Naive thymus-derived CD4-positive, alpha-beta T cell (primary cell): ENCODE measurements at regions of chr4 and their contacts with region 1.

Region 1: DNA sequence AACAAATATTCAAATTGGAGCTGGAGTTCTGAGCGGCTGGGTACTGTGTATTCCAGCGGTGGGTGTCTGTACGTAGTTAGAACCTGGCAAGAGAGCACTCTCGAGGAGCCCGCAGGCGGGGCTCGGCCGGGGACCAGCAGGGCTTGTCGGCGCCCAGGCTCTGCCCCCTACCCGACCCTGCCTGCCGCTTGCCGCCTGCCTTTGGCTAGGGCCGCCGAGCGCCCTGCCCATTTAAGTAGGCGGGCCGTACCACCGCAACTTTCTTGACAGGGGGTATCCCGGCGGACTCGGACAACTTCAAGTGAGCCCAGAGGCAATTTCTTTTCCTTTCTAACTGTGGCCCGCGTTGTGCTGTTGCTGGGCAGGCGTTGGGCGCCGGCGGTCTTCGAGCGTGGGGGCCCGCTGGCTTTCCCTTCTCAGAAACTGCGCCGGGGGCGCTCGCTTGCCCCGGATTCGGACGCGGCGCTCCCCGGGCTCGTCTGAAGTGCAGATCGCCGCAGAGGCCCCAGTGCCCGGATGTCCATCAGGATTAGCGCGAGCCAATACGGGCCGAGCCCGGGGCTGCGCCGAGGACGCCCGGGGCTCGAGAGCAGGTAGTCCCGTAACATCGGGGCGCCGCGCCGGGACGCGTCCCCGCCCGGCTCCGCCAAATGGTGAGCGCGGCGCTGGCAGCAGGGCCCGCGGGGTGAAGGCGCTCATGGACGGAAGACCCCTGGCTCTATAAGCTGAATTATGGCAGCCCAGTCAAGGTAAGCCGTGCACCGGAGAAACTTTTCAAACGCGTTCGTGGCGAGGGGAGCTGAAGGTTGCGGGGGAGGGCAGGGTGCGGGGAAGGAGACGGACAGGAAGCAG is 72.1 kb downstream of the AFF1 start:
- DNase-seq: peak; percentile 85 to 92 (median 89)
- ATAC-seq: peak; percentile 88
- H3K4me3 ChIP-seq: peak overlapping the region; percentile 85
- H3K4me3 Mint-ChIP-seq: peak overlapping the region; percentile 87 to 100 (median 93)
- H3K27ac ChIP-seq: peak overlapping the region; percentile 91
- H3K27ac Mint-ChIP-seq: peak overlapping the region; percentile 95 to 99 (median 98)
- H3K4me1 ChIP-seq: peaks cover 25 to 28% of the 10 kb centered on the region in 2 donors
- H3K4me1 Mint-ChIP-seq: peaks cover 39 to 72% (median 59%) of the 10 kb centered on the region in 7 donors
- H3K27me3 ChIP-seq: no peaks in the 10 kb centered on the region
- H3K27me3 Mint-ChIP-seq: no peaks in the 10 kb centered on the region

Region 2: DNA sequence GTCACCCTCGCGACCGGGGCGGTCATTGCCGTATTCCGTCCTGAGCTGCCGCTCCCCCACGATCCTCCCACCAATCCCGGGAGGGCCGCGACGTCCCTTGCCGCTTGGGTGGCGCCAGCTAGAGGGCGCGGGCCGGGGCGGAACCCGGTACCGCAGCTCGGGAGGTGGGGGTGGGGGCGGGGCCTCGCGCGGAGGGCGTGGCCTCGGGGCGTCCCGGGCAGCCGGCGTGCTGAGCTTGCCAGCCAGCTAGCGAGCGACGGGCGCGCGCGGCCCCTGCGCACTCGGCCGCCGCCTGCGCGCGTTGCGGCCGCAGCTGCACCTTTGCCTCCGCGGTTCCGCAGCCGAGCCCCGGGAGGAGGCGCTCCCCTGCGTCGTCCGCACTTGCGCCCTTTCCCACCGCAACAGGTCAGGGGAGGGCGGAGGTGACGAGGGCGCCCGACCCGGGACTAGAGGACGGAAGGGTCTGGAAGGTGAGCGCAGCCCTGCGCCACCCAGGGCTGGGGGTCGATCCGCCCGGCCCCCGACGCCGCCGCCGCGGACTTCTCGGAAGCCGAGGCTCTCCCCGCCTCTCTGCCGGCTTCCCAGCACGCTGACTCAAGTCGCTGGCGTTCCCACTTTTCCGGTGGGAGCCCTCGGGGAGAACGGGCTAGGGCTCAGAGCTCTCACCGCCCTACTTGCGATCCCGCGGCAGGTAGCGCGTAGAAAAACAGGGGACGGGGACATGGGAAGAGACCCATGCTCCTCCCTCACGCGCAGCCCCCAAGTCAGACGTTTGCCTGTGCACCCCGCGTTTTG is 71.9 kb before region 1 on chr4 and contains the start of gene AFF1:
- CTCF ChIA-PET with region 1: interaction called, 17 read pairs
- POLR2A ChIA-PET with region 1: interaction called, 193 read pairs
- intact Hi-C with region 1: loop called (anchors 1 kb)
- DNase-seq: peak; percentile 74 to 91 (median 81)
- ATAC-seq: peak; percentile 90
- H3K4me3 ChIP-seq: peak within 1 kb of the TSS; percentile 91
- H3K4me3 Mint-ChIP-seq: peak within 1 kb of the TSS; percentile 92 to 97 (median 94)
- H3K27ac ChIP-seq: peak within 1 kb of the TSS; percentile 90
- H3K27ac Mint-ChIP-seq: peak within 1 kb of the TSS; percentile 91 to 97 (median 96)
- H3K4me1 ChIP-seq: peaks cover 29% of the 10 kb centered on the region in 2 donors
- H3K4me1 Mint-ChIP-seq: peaks cover 37 to 61% (median 53%) of the 10 kb centered on the region in 7 donors
- H3K27me3 ChIP-seq: no peaks in the 10 kb centered on the region
- H3K27me3 Mint-ChIP-seq: no peaks in the 10 kb centered on the region
- total RNA-seq, gene AFF1: 65.8 to 88.6 (median 78.7) TPM

Region 3: GRCh38 chr4:87044511-87045233 is 37.8 kb after region 1 on chr4:
- CTCF ChIA-PET with region 1: no interaction called
- POLR2A ChIA-PET with region 1: interaction called, 4 read pairs
- intact Hi-C with region 1: loop called in 1 of 2 experiments (anchors 2 kb)
- DNase-seq: no peak
- ATAC-seq: peak; percentile 44
- H3K4me3 ChIP-seq: no peak overlapping the region
- H3K4me3 Mint-ChIP-seq: no peak overlapping the region
- H3K27ac ChIP-seq: no peak overlapping the region
- H3K27ac Mint-ChIP-seq: no peak overlapping the region
- H3K4me1 ChIP-seq: peaks cover 0 to 8% of the 10 kb centered on the region in 2 donors
- H3K4me1 Mint-ChIP-seq: peaks cover 19 to 55% (median 29%) of the 10 kb centered on the region in 7 donors
- H3K27me3 ChIP-seq: no peaks in the 10 kb centered on the region
- H3K27me3 Mint-ChIP-seq: no peaks in the 10 kb centered on the region

Region 4: GRCh38 chr4:87103691-87104187 is 96.8 kb after region 1 on chr4:
- CTCF ChIA-PET with region 1: interaction called, 3 read pairs
- POLR2A ChIA-PET with region 1: interaction called, 5 read pairs
- intact Hi-C with region 1: loop called (anchors 1 kb)
- DNase-seq: peak in 7 of 9 donors; percentile 45 to 83 (median 64)
- ATAC-seq: peak; percentile 87
- H3K4me3 ChIP-seq: no peak overlapping the region
- H3K4me3 Mint-ChIP-seq: peak overlapping the region; percentile 24 to 81 (median 69)
- H3K27ac ChIP-seq: peak overlapping the region; percentile 56
- H3K27ac Mint-ChIP-seq: peak overlapping the region; percentile 65 to 99 (median 92)
- H3K4me1 ChIP-seq: peaks cover 13 to 23% of the 10 kb centered on the region in 2 donors
- H3K4me1 Mint-ChIP-seq: peaks cover 26 to 75% (median 60%) of the 10 kb centered on the region in 7 donors
- H3K27me3 ChIP-seq: no peaks in the 10 kb centered on the region
- H3K27me3 Mint-ChIP-seq: no peaks in the 10 kb centered on the region

Region 5: GRCh38 chr4:87126000-87126399 is 119.1 kb after region 1 on chr4:
- CTCF ChIA-PET with region 1: no interaction called
- POLR2A ChIA-PET with region 1: no interaction called
- intact Hi-C with region 1: no loop called
- DNase-seq: no peak
- ATAC-seq: no peak
- H3K4me3 ChIP-seq: no peak overlapping the region
- H3K4me3 Mint-ChIP-seq: no peak overlapping the region
- H3K27ac ChIP-seq: no peak overlapping the region
- H3K27ac Mint-ChIP-seq: no peak overlapping the region
- H3K4me1 ChIP-seq: no peaks in the 10 kb centered on the region
- H3K4me1 Mint-ChIP-seq: peaks cover 2 to 19% (median 10%) of the 10 kb centered on the region in 7 donors
- H3K27me3 ChIP-seq: no peaks in the 10 kb centered on the region
- H3K27me3 Mint-ChIP-seq: no peaks in the 10 kb centered on the region

Region 6: GRCh38 chr4:87422104-87423052 is 415.5 kb after region 1 on chr4 and contains the start of gene NUDT9:
- CTCF ChIA-PET with region 1: no interaction called
- POLR2A ChIA-PET with region 1: interaction called, 6 read pairs
- intact Hi-C with region 1: loop called (anchors 1 to 10 kb)
- DNase-seq: peak; percentile 74 to 92 (median 89)
- ATAC-seq: peak; percentile 92
- H3K4me3 ChIP-seq: peak within 1 kb of the TSS; percentile 96
- H3K4me3 Mint-ChIP-seq: peak within 1 kb of the TSS; percentile 94 to 100 (median 98)
- H3K27ac ChIP-seq: peak within 1 kb of the TSS; percentile 85
- H3K27ac Mint-ChIP-seq: peak within 1 kb of the TSS; percentile 97 to 100 (median 99)
- H3K4me1 ChIP-seq: peaks cover 17% of the 10 kb centered on the region in 2 donors
- H3K4me1 Mint-ChIP-seq: peaks cover 14 to 59% (median 48%) of the 10 kb centered on the region in 7 donors
- H3K27me3 ChIP-seq: no peaks in the 10 kb centered on the region
- H3K27me3 Mint-ChIP-seq: no peaks in the 10 kb centered on the region
- total RNA-seq, gene NUDT9: 9.7 to 18.1 (median 10.5) TPM

Region 7: GRCh38 chr4:88613417-88613875 is 1606.5 kb after region 1 on chr4:
- CTCF ChIA-PET with region 1: no interaction called
- POLR2A ChIA-PET with region 1: no interaction called
- intact Hi-C with region 1: loop called in 1 of 2 experiments (anchors 5 kb)
- DNase-seq: peak in 7 of 9 donors; percentile 71 to 91 (median 85)
- ATAC-seq: peak; percentile 94
- H3K4me3 ChIP-seq: peak overlapping the region; percentile 43
- H3K4me3 Mint-ChIP-seq: peak overlapping the region; percentile 64 to 92 (median 84)
- H3K27ac ChIP-seq: peak overlapping the region; percentile 77
- H3K27ac Mint-ChIP-seq: peak overlapping the region; percentile 91 to 99 (median 99)
- H3K4me1 ChIP-seq: peaks cover 28 to 55% of the 10 kb centered on the region in 2 donors
- H3K4me1 Mint-ChIP-seq: peaks cover 50 to 98% (median 86%) of the 10 kb centered on the region in 7 donors
- H3K27me3 ChIP-seq: no peaks in the 10 kb centered on the region
- H3K27me3 Mint-ChIP-seq: no peaks in the 10 kb centered on the region